Activated CD4-positive, alpha-beta memory T cell treated with anti-CD3 and anti-CD28 coated beads for 36 hours (primary cell): ENCODE measurements at regions of chr2 and their contacts with region 1.

Region 1: GRCh38 chr2:28594289-28595108 is 98.6 kb downstream of the PLB1 start:
- DNase-seq: peak; percentile 91
- H3K4me3 Mint-ChIP-seq: peak overlapping the region; percentile 23
- H3K27ac Mint-ChIP-seq: peak overlapping the region; percentile 55
- H3K4me1 Mint-ChIP-seq: peaks cover 15% of the 10 kb centered on the region
- H3K27me3 Mint-ChIP-seq: no peaks in the 10 kb centered on the region

Region 2: GRCh38 chr2:28539118-28539541 is 55.4 kb before region 1 on chr2:
- CTCF ChIA-PET with region 1: no interaction called
- POLR2A ChIA-PET with region 1: no interaction called
- intact Hi-C with region 1: no loop called
- DNase-seq: no peak
- H3K4me3 Mint-ChIP-seq: no peak overlapping the region
- H3K27ac Mint-ChIP-seq: no peak overlapping the region
- H3K4me1 Mint-ChIP-seq: peaks cover 4% of the 10 kb centered on the region
- H3K27me3 Mint-ChIP-seq: no peaks in the 10 kb centered on the region

Region 3: DNA sequence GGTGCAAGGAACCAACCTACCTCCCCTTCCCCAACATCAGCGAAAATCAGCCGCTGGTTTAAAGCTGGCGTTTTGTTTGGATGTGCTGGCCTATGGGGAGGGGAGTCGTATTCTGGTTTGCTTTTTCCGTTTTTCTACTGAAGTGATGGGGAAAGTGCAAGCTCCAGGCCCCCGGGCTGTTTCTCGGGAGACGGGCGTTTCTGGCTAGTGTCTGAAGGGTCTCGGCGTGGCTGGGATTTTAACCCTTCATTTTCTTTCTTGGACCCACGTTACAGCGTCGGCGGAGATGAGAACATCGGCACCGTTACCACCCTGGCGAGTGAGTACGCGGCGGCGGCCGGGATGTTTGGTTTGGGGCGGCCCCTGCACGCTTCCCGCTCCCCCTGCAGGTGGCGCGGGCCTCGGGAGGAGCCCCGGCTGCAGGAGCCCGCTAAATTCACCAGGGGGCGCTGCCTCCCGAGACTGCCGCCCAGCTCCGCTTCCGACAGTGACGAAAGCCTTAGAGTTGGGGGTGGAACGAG is 27.9 kb before region 1 on chr2:
- CTCF ChIA-PET with region 1: interaction called, 64 read pairs
- POLR2A ChIA-PET with region 1: no interaction called
- intact Hi-C with region 1: no loop called
- DNase-seq: peak; percentile 94
- H3K4me3 Mint-ChIP-seq: peak overlapping the region; percentile 83
- H3K27ac Mint-ChIP-seq: peak overlapping the region; percentile 38
- H3K4me1 Mint-ChIP-seq: peaks cover 15% of the 10 kb centered on the region
- H3K27me3 Mint-ChIP-seq: no peaks in the 10 kb centered on the region

Region 4: GRCh38 chr2:28610583-28611201 is 16.2 kb after region 1 on chr2:
- CTCF ChIA-PET with region 1: interaction called, 64 read pairs
- POLR2A ChIA-PET with region 1: interaction called, 7 read pairs
- intact Hi-C with region 1: no loop called
- DNase-seq: peak; percentile 82
- H3K4me3 Mint-ChIP-seq: peak overlapping the region; percentile 30
- H3K27ac Mint-ChIP-seq: peak overlapping the region; percentile 53
- H3K4me1 Mint-ChIP-seq: peaks cover 25% of the 10 kb centered on the region
- H3K27me3 Mint-ChIP-seq: no peaks in the 10 kb centered on the region

Region 5: GRCh38 chr2:28656937-28657615 is 62.6 kb after region 1 on chr2:
- CTCF ChIA-PET with region 1: interaction called, 3 read pairs
- POLR2A ChIA-PET with region 1: no interaction called
- intact Hi-C with region 1: loop called (anchors 2 kb)
- DNase-seq: peak; percentile 46
- H3K4me3 Mint-ChIP-seq: no peak overlapping the region
- H3K27ac Mint-ChIP-seq: no peak overlapping the region
- H3K4me1 Mint-ChIP-seq: peaks cover 19% of the 10 kb centered on the region
- H3K27me3 Mint-ChIP-seq: no peaks in the 10 kb centered on the region

Region 6: GRCh38 chr2:28725021-28725711 is 130.7 kb after region 1 on chr2:
- CTCF ChIA-PET with region 1: interaction called, 20 read pairs
- POLR2A ChIA-PET with region 1: no interaction called
- intact Hi-C with region 1: no loop called
- DNase-seq: no peak
- H3K4me3 Mint-ChIP-seq: no peak overlapping the region
- H3K27ac Mint-ChIP-seq: no peak overlapping the region
- H3K4me1 Mint-ChIP-seq: no peaks in the 10 kb centered on the region
- H3K27me3 Mint-ChIP-seq: no peaks in the 10 kb centered on the region

Region 7: DNA sequence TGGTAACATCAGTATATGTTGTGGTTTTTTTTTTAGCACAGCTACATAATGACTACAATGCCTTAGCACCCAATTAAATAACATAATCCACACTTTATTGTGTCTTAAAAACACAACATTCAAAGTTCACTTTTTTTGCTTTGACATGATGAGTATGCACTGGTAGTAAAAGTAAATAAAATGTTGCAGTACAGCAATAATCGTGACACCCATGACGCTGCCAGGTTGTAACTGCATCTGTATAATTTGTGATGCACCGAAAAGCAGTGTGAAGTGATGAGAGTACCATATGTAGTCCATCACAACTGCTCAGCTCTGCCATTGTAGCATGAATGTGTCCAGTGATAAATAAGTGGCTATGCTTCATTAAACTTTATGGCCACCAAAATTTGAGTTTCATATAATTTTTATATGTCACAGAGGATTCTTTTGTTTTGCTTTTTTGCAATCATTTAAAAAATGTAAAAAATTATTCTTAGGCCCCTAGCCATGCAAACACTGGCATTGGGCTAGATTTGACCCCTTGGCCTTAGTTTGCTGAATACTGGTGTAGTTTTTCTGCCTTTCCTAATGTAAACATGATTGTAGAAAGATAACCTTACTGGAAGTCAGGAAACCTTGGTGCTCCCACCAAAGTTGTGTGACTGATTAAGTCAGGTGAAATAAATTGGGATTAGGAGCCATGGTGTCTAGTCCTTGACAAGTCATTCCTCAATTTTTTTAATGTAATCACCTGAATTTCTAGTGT is 173.0 kb after region 1 on chr2:
- CTCF ChIA-PET with region 1: interaction called, 33 read pairs
- POLR2A ChIA-PET with region 1: no interaction called
- intact Hi-C with region 1: no loop called
- DNase-seq: no peak
- H3K4me3 Mint-ChIP-seq: no peak overlapping the region
- H3K27ac Mint-ChIP-seq: no peak overlapping the region
- H3K4me1 Mint-ChIP-seq: peaks cover 82% of the 10 kb centered on the region
- H3K27me3 Mint-ChIP-seq: no peaks in the 10 kb centered on the region

Region 8: DNA sequence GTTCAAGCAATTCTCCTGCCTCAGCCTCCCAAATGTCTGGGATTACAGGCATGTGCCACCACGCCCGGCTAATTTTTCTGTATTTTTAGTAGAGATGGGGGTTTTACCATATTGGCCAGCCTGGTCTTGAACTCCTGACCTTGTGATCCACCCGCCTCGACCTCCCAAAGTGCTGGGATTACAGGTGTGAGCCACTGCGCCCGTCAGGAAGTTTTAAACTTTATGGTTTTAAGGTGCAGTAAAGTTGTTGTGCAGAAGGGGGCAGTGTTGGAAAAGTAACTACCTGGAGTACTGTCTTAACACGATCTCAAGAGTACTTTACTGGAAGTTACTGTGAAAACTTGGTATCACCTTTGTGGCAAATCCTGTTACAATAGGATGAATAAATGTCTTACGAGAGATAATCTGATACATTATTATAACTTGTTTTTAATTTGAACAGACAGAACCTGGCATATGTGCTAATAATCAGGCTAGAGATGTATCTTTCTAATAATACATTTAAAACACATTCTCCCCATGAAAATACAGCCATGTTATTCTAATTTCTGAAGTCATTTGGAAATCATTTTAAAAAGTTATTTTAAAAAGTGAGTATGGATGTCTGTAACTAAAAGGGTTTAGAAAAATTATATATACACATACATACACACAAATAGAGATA is 226.9 kb after region 1 on chr2:
- CTCF ChIA-PET with region 1: interaction called, 13 read pairs
- POLR2A ChIA-PET with region 1: no interaction called
- intact Hi-C with region 1: no loop called
- DNase-seq: peak; percentile 62
- H3K4me3 Mint-ChIP-seq: no peak overlapping the region
- H3K27ac Mint-ChIP-seq: no peak overlapping the region
- H3K4me1 Mint-ChIP-seq: peaks cover 6% of the 10 kb centered on the region
- H3K27me3 Mint-ChIP-seq: no peaks in the 10 kb centered on the region